Aorta (tissue), 5 donors: ENCODE measurements at regions of chr6 and their contacts with region 1.

Region 1: GRCh38 chr6:87139236-87139635 is 16.1 kb upstream of the ZNF292 start:
- DNase-seq: no peak
- ATAC-seq: peak; percentile 69
- H3K4me3 ChIP-seq: no peak overlapping the region
- H3K27ac ChIP-seq: no peak overlapping the region
- H3K4me1 ChIP-seq: no peaks in the 10 kb centered on the region
- H3K27me3 ChIP-seq: no peaks in the 10 kb centered on the region

Region 2: DNA sequence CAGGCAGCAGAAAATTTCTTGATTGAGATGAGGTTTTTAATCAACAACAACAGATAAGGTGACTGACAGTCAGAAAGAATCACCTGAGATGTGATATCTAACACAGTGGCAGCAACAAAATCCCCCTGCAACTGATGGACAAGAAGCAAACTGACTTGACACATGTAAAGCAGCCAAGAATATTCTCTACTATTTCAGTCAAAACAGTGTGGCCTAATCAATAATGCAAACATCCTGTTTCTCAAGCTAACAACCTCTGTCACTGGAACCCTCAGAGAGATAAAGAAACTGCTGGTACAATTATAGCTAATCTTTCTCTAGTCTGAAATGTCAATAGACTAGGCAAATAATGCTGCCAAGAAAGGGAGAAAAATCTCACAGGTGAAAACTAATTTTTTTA is 39.8 kb before region 1 on chr6:
- intact Hi-C with region 1: no loop called
- DNase-seq: no peak
- ATAC-seq: no peak
- H3K4me3 ChIP-seq: no peak overlapping the region
- H3K27ac ChIP-seq: no peak overlapping the region
- H3K4me1 ChIP-seq: no peaks in the 10 kb centered on the region
- H3K27me3 ChIP-seq: no peaks in the 10 kb centered on the region

Region 3: DNA sequence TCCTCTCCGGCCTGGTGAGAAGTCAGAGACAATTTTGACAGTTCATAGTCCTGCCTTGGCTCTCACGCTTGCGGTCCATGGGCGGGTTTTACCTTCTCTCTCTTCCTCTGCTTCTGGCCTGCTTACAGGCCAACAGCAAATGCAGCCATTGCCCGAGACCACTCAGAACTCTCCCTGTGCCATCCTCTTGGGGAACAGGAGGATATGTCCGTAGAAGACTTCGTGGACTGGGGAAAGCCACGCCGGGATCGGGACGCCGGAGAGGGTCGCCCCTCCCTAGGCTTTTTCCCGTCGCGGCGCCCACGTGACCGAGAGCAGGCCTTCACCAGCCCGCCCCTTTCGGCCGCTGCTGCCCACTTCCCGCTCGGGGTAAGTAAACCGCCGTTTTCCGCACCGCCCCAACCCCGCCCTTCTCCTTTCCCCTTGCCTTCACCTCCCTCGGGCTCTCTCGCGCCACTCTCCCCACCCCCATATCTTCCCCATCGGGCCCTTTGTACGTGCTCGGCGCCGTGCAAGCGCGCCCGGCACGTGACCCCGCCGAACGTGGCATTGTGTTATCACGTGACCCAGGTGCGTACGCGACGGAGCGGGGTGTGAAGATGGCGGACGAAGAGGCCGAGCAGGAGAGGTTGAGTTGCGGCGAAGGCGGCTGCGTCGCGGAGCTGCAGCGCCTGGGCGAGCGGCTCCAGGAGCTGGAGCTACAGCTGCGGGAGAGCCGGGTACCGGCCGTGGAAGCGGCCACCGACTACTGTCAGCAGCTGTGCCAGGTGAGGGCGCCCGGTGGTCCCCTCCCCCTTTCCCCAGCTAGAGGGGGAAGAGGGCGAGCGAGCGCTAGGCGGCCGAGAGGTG is 16.0 kb after region 1 on chr6 and contains the start of gene ZNF292:
- intact Hi-C with region 1: loop called in 1 of 2 experiments (anchors 1 kb)
- DNase-seq: peak; percentile 98
- ATAC-seq: peak; percentile 95
- H3K4me3 ChIP-seq: peak within 1 kb of the TSS; percentile 54 to 71
- H3K27ac ChIP-seq: peak within 1 kb of the TSS; percentile 62 to 85
- H3K4me1 ChIP-seq: peaks cover 0 to 3% of the 10 kb centered on the region in 2 donors
- H3K27me3 ChIP-seq: no peaks in the 10 kb centered on the region
- total RNA-seq, gene ZNF292: 57.9 to 71.6 TPM

Region 4: DNA sequence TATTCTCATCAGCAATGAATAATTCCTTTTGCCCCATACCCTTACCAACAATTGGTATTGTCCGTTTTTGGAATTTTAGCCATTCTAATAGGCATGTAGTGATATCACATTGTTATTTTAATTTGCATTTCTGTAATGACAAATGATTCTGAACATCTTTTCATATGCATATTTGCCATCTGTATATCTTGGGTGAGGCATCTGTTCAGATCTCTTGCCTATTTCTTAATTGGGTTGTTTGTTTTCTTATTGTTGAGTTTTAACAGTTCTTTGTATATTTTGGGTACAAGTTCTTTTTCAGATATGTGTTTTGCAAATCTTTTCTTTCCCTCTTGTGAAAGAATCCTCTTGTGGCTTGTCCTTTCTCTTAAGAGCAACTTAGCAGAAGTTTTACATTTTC is 85.7 kb after region 1 on chr6:
- intact Hi-C with region 1: no loop called
- DNase-seq: no peak
- ATAC-seq: no peak
- H3K4me3 ChIP-seq: no peak overlapping the region
- H3K27ac ChIP-seq: no peak overlapping the region
- H3K4me1 ChIP-seq: no peaks in the 10 kb centered on the region
- H3K27me3 ChIP-seq: no peaks in the 10 kb centered on the region

Region 5: GRCh38 chr6:87237804-87238203 is 98.6 kb after region 1 on chr6:
- intact Hi-C with region 1: loop called (anchors 2 to 5 kb)
- DNase-seq: no peak
- ATAC-seq: no peak
- H3K4me3 ChIP-seq: no peak overlapping the region
- H3K27ac ChIP-seq: no peak overlapping the region
- H3K4me1 ChIP-seq: no peaks in the 10 kb centered on the region
- H3K27me3 ChIP-seq: no peaks in the 10 kb centered on the region

Region 6: GRCh38 chr6:87393022-87393622 is 253.9 kb after region 1 on chr6:
- intact Hi-C with region 1: loop called in 1 of 2 experiments (anchors 5 kb)
- DNase-seq: no peak
- ATAC-seq: peak; percentile 78
- H3K4me3 ChIP-seq: no peak overlapping the region
- H3K27ac ChIP-seq: no peak overlapping the region
- H3K4me1 ChIP-seq: no peaks in the 10 kb centered on the region
- H3K27me3 ChIP-seq: no peaks in the 10 kb centered on the region